GM13977 (cell line): ENCODE measurements at regions of chr10 and their contacts with region 1.

Region 1: GRCh38 chr10:99234041-99234790 is 1.4 kb downstream of the HPSE2 start:
- DNase-seq: peak; percentile 87
- CTCF ChIP-seq: peak; percentile 10

Region 2: GRCh38 chr10:98758463-98758862 is 475.8 kb before region 1 on chr10:
- in situ Hi-C with region 1: loop called (anchors 25 kb)
- DNase-seq: no peak
- CTCF ChIP-seq: no peak

Region 3: DNA sequence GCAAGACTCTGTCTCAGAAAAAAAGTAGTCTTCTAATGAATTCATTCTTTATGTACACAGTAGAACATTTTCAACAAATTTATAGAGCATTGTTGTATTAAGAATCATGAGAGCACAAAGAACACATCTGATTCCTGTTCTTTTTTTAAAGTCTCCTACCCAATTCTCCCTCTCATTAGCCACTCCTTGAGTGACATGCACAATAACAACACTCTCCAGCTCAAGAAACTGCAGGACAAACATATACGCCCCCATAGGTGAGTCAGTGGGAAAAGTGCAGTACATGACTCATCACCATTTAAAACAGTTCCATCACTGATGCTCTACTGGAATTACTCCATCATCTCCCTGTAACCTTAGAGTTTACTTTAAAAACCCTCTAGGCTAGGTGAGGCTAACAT is 93.2 kb before region 1 on chr10:
- in situ Hi-C with region 1: no loop called
- DNase-seq: no peak
- CTCF ChIP-seq: no peak

Region 4: DNA sequence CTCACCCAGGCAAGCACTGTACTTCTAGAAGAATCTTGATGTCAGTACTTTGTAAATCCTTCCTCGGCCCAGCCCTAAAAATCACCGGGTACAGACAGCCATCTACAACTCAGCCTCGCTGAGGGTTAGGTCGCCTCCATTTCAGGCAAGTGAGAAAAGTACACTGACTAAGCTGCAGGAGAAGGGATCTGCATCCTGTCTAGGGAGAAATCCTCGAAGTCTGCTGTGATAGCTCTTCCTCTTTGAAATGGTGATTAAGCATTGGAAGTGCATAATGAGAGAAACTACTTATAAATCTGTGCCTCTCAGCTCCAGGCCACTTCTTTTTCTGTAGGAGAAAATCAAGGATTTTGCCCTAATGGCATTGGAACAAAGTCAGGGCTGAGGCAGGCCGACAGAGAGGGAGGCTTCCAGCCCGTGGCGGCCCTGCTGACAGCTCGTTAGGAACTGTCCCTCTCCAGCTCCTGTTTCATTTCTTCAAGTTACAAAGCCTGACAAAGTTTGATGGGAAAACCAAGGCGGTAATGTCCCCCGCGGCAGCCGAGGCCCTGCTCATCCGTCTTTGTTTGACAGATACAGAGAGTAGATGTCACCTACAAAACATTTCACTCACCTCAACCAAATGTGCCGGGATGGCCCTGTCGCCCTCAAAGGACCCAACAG is 210.3 kb after region 1 on chr10:
- in situ Hi-C with region 1: no loop called
- DNase-seq: no peak
- CTCF ChIP-seq: no peak